ENCODE measurements at regions of chr18 and their contacts with region 1.

Region 1: GRCh38 chr18:21194871-21195771 is 46.9 kb upstream of the GREB1L start:
- DNase-seq: no peak
- H3K4me3 Mint-ChIP-seq: no peak overlapping the region
- H3K27ac Mint-ChIP-seq: no peak overlapping the region
- H3K4me1 Mint-ChIP-seq: no peaks in the 10 kb centered on the region
- H3K27me3 Mint-ChIP-seq: peaks cover 10% of the 10 kb centered on the region

Region 2: DNA sequence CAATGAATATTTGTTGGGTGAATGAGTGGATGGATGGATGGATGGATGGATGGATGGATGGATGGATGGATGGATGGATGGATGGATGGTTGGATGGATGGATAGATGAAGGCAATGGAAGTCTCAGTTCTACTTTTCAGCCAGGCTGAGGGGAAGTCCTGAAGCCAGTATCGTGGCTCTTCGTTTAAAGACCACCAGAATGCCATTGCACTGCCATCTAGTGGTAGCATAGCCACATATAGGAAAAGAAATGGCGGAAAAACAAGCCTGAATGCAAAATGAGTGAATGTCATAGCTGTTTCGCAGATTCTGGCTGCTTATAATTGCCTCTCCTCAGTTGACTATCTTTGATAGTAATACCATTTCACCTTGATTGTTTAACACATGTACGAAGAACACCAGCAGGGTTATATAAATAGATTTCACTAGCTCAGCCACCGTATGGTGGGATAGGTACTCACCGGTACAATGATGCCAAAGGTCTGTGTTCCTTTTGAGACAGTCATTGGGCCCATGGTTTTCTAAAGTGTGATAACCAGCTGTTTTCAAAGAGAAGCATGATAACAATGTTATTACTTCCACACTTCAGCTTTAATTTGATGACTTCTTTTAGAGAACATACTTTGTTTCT is 15.4 kb before region 1 on chr18:
- CTCF ChIA-PET with region 1: interaction called, 10 read pairs
- DNase-seq: peak; percentile 57
- H3K4me3 Mint-ChIP-seq: no peak overlapping the region
- H3K27ac Mint-ChIP-seq: no peak overlapping the region
- H3K4me1 Mint-ChIP-seq: no peaks in the 10 kb centered on the region
- H3K27me3 Mint-ChIP-seq: no peaks in the 10 kb centered on the region

Region 3: DNA sequence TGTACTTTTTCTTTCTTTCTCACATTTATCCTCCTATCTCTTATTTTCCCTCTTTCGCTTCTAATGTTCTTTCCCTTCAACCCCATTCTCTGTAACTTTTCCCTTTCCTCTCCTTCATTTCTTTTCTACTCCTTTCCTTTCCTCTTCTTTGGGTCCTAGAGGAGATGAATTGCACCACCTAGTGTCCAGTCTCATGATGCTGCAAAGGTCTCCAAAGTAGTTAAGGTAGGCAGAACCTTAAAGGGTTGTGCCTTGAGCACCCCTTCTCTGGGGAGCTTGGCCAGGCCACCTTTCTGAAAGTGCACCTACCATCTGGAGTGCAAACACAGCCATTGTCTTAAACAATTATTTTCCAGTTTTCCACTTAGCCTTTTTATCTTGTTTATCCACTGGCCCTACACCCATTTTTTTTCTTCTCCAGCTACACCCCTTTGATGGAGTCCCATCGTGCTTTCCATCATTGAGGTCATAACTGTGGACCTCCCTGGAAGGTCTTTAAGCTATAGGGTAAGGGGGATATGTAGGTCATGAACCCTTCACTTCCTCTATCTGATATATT is 249.4 kb after region 1 on chr18:
- CTCF ChIA-PET with region 1: interaction called, 13 read pairs
- DNase-seq: peak; percentile 23
- H3K4me3 Mint-ChIP-seq: no peak overlapping the region
- H3K27ac Mint-ChIP-seq: no peak overlapping the region
- H3K4me1 Mint-ChIP-seq: no peaks in the 10 kb centered on the region
- H3K27me3 Mint-ChIP-seq: peaks cover 13% of the 10 kb centered on the region

Measured in activated naive CD4-positive, alpha-beta T cell treated with anti-CD3 and anti-CD28 coated beads, Interleukin-2, amount 10 ng/mL, durations not matched to agents 7 days and 5 days (primary cell).